Heart right ventricle (tissue), 16 donors: ENCODE measurements at regions of chr4 and their contacts with region 1.

Region 1: GRCh38 chr4:48538358-48538757 is 48.3 kb downstream of the ZAR1 start:
- DNase-seq: no peak
- ATAC-seq: no peak
- H3K4me3 ChIP-seq: no peak overlapping the region
- H3K27ac ChIP-seq: no peak overlapping the region
- H3K4me1 ChIP-seq: peaks cover 0 to 22% (median 5%) of the 10 kb centered on the region in 9 donors
- H3K27me3 ChIP-seq: no peaks in the 10 kb centered on the region
- CTCF ChIP-seq: no peak

Region 2: GRCh38 chr4:48141048-48141447 is 397.3 kb before region 1 on chr4:
- intact Hi-C with region 1: loop called in 1 of 10 experiments (anchors 5 kb)
- DNase-seq: no peak
- ATAC-seq: peak in 2 of 8 donors; percentile 42 to 56
- H3K4me3 ChIP-seq: no peak overlapping the region
- H3K27ac ChIP-seq: no peak overlapping the region
- H3K4me1 ChIP-seq: peaks cover 0 to 4% (median 0%) of the 10 kb centered on the region in 9 donors
- H3K27me3 ChIP-seq: no peaks in the 10 kb centered on the region
- CTCF ChIP-seq: peak; percentile 25 to 68 (median 60)

Region 3: GRCh38 chr4:48388525-48389154 is 149.7 kb before region 1 on chr4:
- intact Hi-C with region 1: no loop called
- DNase-seq: no peak
- ATAC-seq: peak in 7 of 8 donors; percentile 51 to 87 (median 74)
- H3K4me3 ChIP-seq: no peak overlapping the region
- H3K27ac ChIP-seq: peak overlapping the region in 4 of 10 donors; percentile 6 to 38 (median 22)
- H3K4me1 ChIP-seq: peaks cover 0 to 23% (median 12%) of the 10 kb centered on the region in 9 donors
- H3K27me3 ChIP-seq: no peaks in the 10 kb centered on the region
- CTCF ChIP-seq: no peak

Region 4: GRCh38 chr4:48439988-48440387 is 98.4 kb before region 1 on chr4:
- intact Hi-C with region 1: loop called in 3 of 10 experiments (anchors 5 to 10 kb)
- DNase-seq: no peak
- ATAC-seq: peak in 2 of 8 donors; percentile 29 to 31
- H3K4me3 ChIP-seq: no peak overlapping the region
- H3K27ac ChIP-seq: no peak overlapping the region
- H3K4me1 ChIP-seq: peaks cover 0 to 13% (median 4%) of the 10 kb centered on the region in 9 donors
- H3K27me3 ChIP-seq: no peaks in the 10 kb centered on the region
- CTCF ChIP-seq: no peak

Region 5: DNA sequence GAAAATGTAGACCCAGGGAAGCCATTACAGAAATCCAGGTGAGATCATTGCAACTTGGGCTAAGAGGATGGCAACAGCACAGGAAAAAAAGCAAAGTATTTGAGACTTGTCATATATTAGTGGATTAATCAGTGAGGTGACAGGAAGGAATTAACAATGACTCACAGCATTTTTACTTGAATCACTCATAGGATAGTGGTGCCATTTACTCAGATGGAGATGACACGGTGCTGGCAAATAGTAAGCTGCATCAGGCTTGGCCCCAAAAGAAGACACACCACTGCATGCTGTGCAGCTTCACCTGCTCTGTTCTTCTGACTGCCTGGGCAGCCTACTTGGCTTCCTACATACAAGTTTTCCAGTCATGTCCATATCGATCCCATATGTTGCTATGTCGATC is 97.0 kb after region 1 on chr4:
- intact Hi-C with region 1: no loop called
- DNase-seq: no peak
- ATAC-seq: peak in 3 of 8 donors; percentile 27 to 50 (median 28)
- H3K4me3 ChIP-seq: no peak overlapping the region
- H3K27ac ChIP-seq: peak overlapping the region in 2 of 10 donors; percentile 9 to 39
- H3K4me1 ChIP-seq: peaks cover 0 to 43% (median 27%) of the 10 kb centered on the region in 9 donors
- H3K27me3 ChIP-seq: no peaks in the 10 kb centered on the region
- CTCF ChIP-seq: no peak